ENCODE measurements at regions of chr19 and their contacts with region 1.

Region 1: GRCh38 chr19:9621156-9622037 is at the start of gene ZNF561:
- DNase-seq: peak; percentile 95
- ATAC-seq: peak; percentile 86
- H3K4me3 ChIP-seq: peak within 1 kb of the TSS; percentile 56 to 91 (median 89)
- H3K4me3 Mint-ChIP-seq: peak within 1 kb of the TSS; percentile 100
- H3K27ac ChIP-seq: peak within 1 kb of the TSS; percentile 83 to 94
- H3K27ac Mint-ChIP-seq: peak within 1 kb of the TSS; percentile 100
- H3K4me1 ChIP-seq: peaks cover 12 to 21% of the 10 kb centered on the region in 2 donors
- H3K4me1 Mint-ChIP-seq: peaks cover 22% of the 10 kb centered on the region
- H3K27me3 ChIP-seq: no peaks in the 10 kb centered on the region
- H3K27me3 Mint-ChIP-seq: peaks cover 2% of the 10 kb centered on the region
- CTCF ChIP-seq: no peak
- total RNA-seq, gene ZNF561: 44.5 and 56.8 TPM in 2 replicates

Region 2: GRCh38 chr19:9140159-9140874 is 481.1 kb before region 1 on chr19 and contains the start of gene ZNF317:
- CTCF ChIA-PET with region 1: no interaction called
- POLR2A ChIA-PET with region 1: no interaction called
- intact Hi-C with region 1: loop called (anchors 5 kb)
- DNase-seq: peak; percentile 94
- ATAC-seq: peak; percentile 90
- H3K4me3 ChIP-seq: peak within 1 kb of the TSS; percentile 70 to 99 (median 97)
- H3K4me3 Mint-ChIP-seq: peak within 1 kb of the TSS; percentile 98
- H3K27ac ChIP-seq: peak within 1 kb of the TSS; percentile 86 to 90
- H3K27ac Mint-ChIP-seq: peak within 1 kb of the TSS; percentile 97
- H3K4me1 ChIP-seq: peaks cover 13 to 15% of the 10 kb centered on the region in 2 donors
- H3K4me1 Mint-ChIP-seq: peaks cover 33% of the 10 kb centered on the region
- H3K27me3 ChIP-seq: no peaks in the 10 kb centered on the region
- H3K27me3 Mint-ChIP-seq: peaks cover 2% of the 10 kb centered on the region
- CTCF ChIP-seq: no peak
- total RNA-seq, gene ZNF317: 60.6 and 65.2 TPM in 2 replicates

Region 3: GRCh38 chr19:9435279-9436268 is 185.8 kb before region 1 on chr19 and contains the start of gene ZNF266:
- CTCF ChIA-PET with region 1: no interaction called
- POLR2A ChIA-PET with region 1: no interaction called
- intact Hi-C with region 1: loop called (anchors 1 kb)
- DNase-seq: peak; percentile 95
- ATAC-seq: peak; percentile 93
- H3K4me3 ChIP-seq: peak within 1 kb of the TSS; percentile 64 to 91 (median 80)
- H3K4me3 Mint-ChIP-seq: peak within 1 kb of the TSS; percentile 95
- H3K27ac ChIP-seq: peak within 1 kb of the TSS; percentile 92 to 93
- H3K27ac Mint-ChIP-seq: peak within 1 kb of the TSS; percentile 98
- H3K4me1 ChIP-seq: peaks cover 16 to 26% of the 10 kb centered on the region in 2 donors
- H3K4me1 Mint-ChIP-seq: peaks cover 35% of the 10 kb centered on the region
- H3K27me3 ChIP-seq: no peaks in the 10 kb centered on the region
- H3K27me3 Mint-ChIP-seq: no peaks in the 10 kb centered on the region
- CTCF ChIP-seq: peak; percentile 77
- total RNA-seq, gene ZNF266: 76.0 and 81.4 TPM in 2 replicates

Region 4: GRCh38 chr19:9674663-9675357 is 53.4 kb after region 1 on chr19 and contains the start of gene ZNF562:
- CTCF ChIA-PET with region 1: no interaction called
- POLR2A ChIA-PET with region 1: no interaction called
- intact Hi-C with region 1: loop called (anchors 1 kb)
- DNase-seq: peak; percentile 90
- ATAC-seq: peak; percentile 88
- H3K4me3 ChIP-seq: peak within 1 kb of the TSS; percentile 74 to 95 (median 81)
- H3K4me3 Mint-ChIP-seq: peak within 1 kb of the TSS; percentile 100
- H3K27ac ChIP-seq: peak within 1 kb of the TSS; percentile 80 to 89
- H3K27ac Mint-ChIP-seq: peak within 1 kb of the TSS; percentile 99
- H3K4me1 ChIP-seq: peaks cover 3% of the 10 kb centered on the region in 2 donors
- H3K4me1 Mint-ChIP-seq: peaks cover 18% of the 10 kb centered on the region
- H3K27me3 ChIP-seq: no peaks in the 10 kb centered on the region
- H3K27me3 Mint-ChIP-seq: no peaks in the 10 kb centered on the region
- CTCF ChIP-seq: no peak
- total RNA-seq, gene ZNF562: 27.9 and 31.8 TPM in 2 replicates

Region 5: GRCh38 chr19:9768175-9769112 is 147.0 kb after region 1 on chr19 and contains the start of gene ZNF846:
- CTCF ChIA-PET with region 1: interaction called, 9 read pairs
- POLR2A ChIA-PET with region 1: interaction called, 3 read pairs
- intact Hi-C with region 1: loop called (anchors 1 kb)
- DNase-seq: peak; percentile 96
- ATAC-seq: peak; percentile 98
- H3K4me3 ChIP-seq: peak within 1 kb of the TSS; percentile 52 to 96 (median 88)
- H3K4me3 Mint-ChIP-seq: peak within 1 kb of the TSS; percentile 96
- H3K27ac ChIP-seq: peak within 1 kb of the TSS; percentile 69 to 94
- H3K27ac Mint-ChIP-seq: peak within 1 kb of the TSS; percentile 98
- H3K4me1 ChIP-seq: peaks cover 0 to 13% of the 10 kb centered on the region in 2 donors
- H3K4me1 Mint-ChIP-seq: peaks cover 15% of the 10 kb centered on the region
- H3K27me3 ChIP-seq: no peaks in the 10 kb centered on the region
- H3K27me3 Mint-ChIP-seq: no peaks in the 10 kb centered on the region
- CTCF ChIP-seq: no peak
- total RNA-seq, gene ZNF846: 18.2 and 24.5 TPM in 2 replicates

Region 6: DNA sequence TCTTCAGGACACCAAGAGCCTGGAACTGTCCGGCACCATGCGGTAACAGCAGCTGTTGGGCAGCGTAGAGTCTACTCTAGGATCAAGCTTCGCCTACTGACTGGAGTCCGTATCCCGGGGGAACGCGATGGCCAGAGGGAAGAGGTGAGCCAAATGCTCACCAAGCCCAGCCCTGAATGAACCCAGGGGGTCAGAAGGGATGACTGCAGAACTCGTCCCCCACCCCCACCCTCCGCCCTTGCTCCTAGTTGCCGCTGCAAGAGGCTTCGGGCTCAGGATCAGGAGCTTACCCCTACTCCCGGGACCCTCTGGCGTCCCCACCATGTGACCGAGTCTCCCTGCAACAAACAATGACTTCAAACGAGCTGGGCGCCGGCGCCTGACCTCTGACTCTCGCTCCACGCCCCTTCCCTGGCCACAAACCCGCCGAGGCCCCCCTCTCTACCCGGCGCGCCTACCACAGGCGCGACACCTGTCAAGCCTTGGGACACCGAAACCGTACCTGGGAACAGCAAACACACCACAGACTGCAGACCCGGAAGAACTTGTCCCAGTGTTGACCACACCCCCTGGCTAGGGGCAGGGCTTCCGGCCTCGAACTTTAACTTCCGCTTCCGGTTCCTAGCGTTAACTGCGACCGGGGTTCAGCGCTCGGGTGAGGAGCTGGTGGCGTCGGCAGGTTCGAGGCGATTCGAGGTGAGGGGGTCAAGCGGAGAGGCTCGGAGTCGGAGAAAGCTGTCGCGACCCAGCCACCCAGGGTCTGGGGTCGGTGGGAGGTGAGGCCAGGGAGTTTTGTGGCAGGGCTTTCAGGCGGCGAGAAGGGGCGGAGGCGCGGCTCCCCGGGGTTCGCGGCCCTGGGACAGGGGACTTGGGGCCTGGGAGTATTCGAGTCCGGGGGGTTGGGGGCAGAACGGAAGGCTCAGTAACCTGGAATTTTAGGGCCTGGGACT is 206.2 kb after region 1 on chr19 and contains the start of gene UBL5:
- CTCF ChIA-PET with region 1: interaction called, 3 read pairs
- POLR2A ChIA-PET with region 1: no interaction called
- intact Hi-C with region 1: loop called (anchors 1 kb)
- DNase-seq: peak; percentile 92
- ATAC-seq: peak; percentile 95
- H3K4me3 ChIP-seq: peak within 1 kb of the TSS; percentile 75 to 95 (median 87)
- H3K4me3 Mint-ChIP-seq: peak within 1 kb of the TSS; percentile 100
- H3K27ac ChIP-seq: peak within 1 kb of the TSS; percentile 58 to 90
- H3K27ac Mint-ChIP-seq: peak within 1 kb of the TSS; percentile 96
- H3K4me1 ChIP-seq: peaks cover 13 to 20% of the 10 kb centered on the region in 2 donors
- H3K4me1 Mint-ChIP-seq: peaks cover 25% of the 10 kb centered on the region
- H3K27me3 ChIP-seq: no peaks in the 10 kb centered on the region
- H3K27me3 Mint-ChIP-seq: no peaks in the 10 kb centered on the region
- CTCF ChIP-seq: no peak
- total RNA-seq, gene UBL5: 154 and 183 TPM in 2 replicates

Region 7: GRCh38 chr19:10027158-10027693 is 405.8 kb after region 1 on chr19:
- CTCF ChIA-PET with region 1: no interaction called
- POLR2A ChIA-PET with region 1: no interaction called
- intact Hi-C with region 1: loop called (anchors 10 kb)
- DNase-seq: no peak
- ATAC-seq: no peak
- H3K4me3 ChIP-seq: no peak overlapping the region
- H3K4me3 Mint-ChIP-seq: no peak overlapping the region
- H3K27ac ChIP-seq: no peak overlapping the region
- H3K27ac Mint-ChIP-seq: no peak overlapping the region
- H3K4me1 ChIP-seq: peaks cover 6 to 8% of the 10 kb centered on the region in 2 donors
- H3K4me1 Mint-ChIP-seq: peaks cover 3% of the 10 kb centered on the region
- H3K27me3 ChIP-seq: peaks cover 0 to 29% (median 11%) of the 10 kb centered on the region in 4 experiments
- H3K27me3 Mint-ChIP-seq: peaks cover 18% of the 10 kb centered on the region
- CTCF ChIP-seq: no peak

Measured in B cell (primary cell).